CD4-positive, alpha-beta T cell (primary cell): ENCODE measurements at regions of chr15 and their contacts with region 1.

Region 1: DNA sequence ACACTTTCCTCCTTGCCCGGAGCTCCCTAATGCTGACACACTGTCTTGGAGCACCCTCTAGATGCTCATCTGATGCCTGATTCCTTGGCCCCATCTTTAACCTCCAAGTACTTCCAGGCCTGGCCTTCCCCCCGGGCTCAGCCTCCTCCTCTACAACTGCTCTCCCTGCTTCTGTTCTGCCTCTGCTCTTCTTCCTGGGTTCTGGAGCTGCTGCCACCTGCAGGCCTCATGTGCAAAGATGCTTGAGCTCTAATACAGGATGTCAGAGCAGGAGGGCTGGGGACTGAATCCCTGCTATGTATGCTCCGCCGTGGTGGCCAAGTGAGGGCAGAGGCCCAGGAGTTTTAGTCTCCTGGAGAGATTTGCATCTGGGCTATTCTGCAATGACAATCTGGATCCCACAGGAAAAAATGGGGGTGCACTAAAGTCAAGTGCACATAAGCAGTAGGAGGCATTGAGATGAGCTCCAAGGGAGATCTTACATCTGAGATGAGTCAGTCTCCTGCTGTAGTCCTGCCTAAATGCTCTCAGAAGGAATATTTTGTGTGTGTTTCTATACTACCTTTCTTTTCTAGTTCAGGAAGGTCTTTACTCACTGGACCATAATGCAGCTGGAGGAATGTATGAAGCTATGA is 296.3 kb downstream of the UACA start:
- DNase-seq: peak in 13 of 14 experiments; percentile 35 to 75 (median 45)
- ATAC-seq: peak; percentile 84
- H3K4me3 ChIP-seq: no peak overlapping the region
- H3K4me3 Mint-ChIP-seq: no peak overlapping the region
- H3K27ac ChIP-seq: no peak overlapping the region
- H3K27ac Mint-ChIP-seq: no peak overlapping the region
- H3K4me1 ChIP-seq: peaks cover 6% of the 10 kb centered on the region
- H3K4me1 Mint-ChIP-seq: peaks cover 5% of the 10 kb centered on the region
- H3K27me3 ChIP-seq: peaks cover 0 to 2% of the 10 kb centered on the region in 2 experiments
- H3K27me3 Mint-ChIP-seq: no peaks in the 10 kb centered on the region
- CTCF ChIP-seq: peak; percentile 70

Region 2: GRCh38 chr15:70111203-70112073 is 355.6 kb before region 1 on chr15:
- CTCF ChIA-PET with region 1: no interaction called
- POLR2A ChIA-PET with region 1: no interaction called
- intact Hi-C with region 1: loop called in 1 of 2 experiments (anchors 10 kb)
- DNase-seq: no peak
- ATAC-seq: no peak
- H3K4me3 ChIP-seq: no peak overlapping the region
- H3K4me3 Mint-ChIP-seq: no peak overlapping the region
- H3K27ac ChIP-seq: no peak overlapping the region
- H3K27ac Mint-ChIP-seq: no peak overlapping the region
- H3K4me1 ChIP-seq: peaks cover 4% of the 10 kb centered on the region
- H3K4me1 Mint-ChIP-seq: peaks cover 5% of the 10 kb centered on the region
- H3K27me3 ChIP-seq: no peaks in the 10 kb centered on the region
- H3K27me3 Mint-ChIP-seq: no peaks in the 10 kb centered on the region
- CTCF ChIP-seq: no peak

Region 3: DNA sequence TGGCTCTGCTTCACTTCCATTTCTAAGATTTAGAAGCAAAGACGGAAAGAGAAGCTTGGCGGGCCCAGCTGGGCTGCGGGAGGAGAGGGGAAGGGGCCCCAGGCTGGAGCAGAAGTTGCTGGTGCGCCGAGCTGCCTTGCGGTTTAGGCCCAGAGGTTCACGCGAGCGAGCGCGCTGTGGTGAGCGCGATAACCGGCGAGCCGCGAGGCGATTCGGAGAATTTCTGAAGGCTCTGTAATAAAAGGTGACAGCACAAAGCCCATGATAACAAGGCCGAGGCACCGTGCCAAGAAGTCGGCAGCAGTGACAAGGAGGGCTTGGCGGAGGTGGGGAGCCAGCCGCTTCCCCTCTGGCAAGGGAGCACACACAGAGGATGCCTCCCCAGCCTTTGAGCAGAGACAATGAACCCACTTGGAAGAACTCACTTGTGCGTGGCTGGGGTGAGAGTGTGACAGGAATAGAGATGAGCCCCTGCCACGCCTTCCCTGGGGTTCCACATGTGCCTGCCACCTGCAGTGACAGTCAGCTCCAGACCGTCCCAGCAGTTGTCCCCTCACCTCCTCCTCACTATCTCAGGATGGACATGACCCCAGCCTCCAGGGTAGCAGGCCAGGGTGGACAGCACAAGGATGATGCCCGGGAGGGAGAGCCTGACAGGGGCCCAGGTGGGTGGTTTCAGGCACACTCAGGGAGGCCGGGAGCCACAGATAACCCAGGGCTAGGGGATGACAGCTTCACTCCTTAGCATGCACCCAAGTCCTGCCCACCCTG is 18.9 kb before region 1 on chr15:
- CTCF ChIA-PET with region 1: no interaction called
- POLR2A ChIA-PET with region 1: no interaction called
- intact Hi-C with region 1: no loop called
- DNase-seq: peak; percentile 9 to 64 (median 38)
- ATAC-seq: peak; percentile 57
- H3K4me3 ChIP-seq: peak overlapping the region; percentile 3
- H3K4me3 Mint-ChIP-seq: peak overlapping the region; percentile 66
- H3K27ac ChIP-seq: no peak overlapping the region
- H3K27ac Mint-ChIP-seq: no peak overlapping the region
- H3K4me1 ChIP-seq: peaks cover 45% of the 10 kb centered on the region
- H3K4me1 Mint-ChIP-seq: peaks cover 45% of the 10 kb centered on the region
- H3K27me3 ChIP-seq: peaks cover 4 to 9% of the 10 kb centered on the region in 2 experiments
- H3K27me3 Mint-ChIP-seq: peaks cover 17% of the 10 kb centered on the region
- CTCF ChIP-seq: no peak

Region 4: DNA sequence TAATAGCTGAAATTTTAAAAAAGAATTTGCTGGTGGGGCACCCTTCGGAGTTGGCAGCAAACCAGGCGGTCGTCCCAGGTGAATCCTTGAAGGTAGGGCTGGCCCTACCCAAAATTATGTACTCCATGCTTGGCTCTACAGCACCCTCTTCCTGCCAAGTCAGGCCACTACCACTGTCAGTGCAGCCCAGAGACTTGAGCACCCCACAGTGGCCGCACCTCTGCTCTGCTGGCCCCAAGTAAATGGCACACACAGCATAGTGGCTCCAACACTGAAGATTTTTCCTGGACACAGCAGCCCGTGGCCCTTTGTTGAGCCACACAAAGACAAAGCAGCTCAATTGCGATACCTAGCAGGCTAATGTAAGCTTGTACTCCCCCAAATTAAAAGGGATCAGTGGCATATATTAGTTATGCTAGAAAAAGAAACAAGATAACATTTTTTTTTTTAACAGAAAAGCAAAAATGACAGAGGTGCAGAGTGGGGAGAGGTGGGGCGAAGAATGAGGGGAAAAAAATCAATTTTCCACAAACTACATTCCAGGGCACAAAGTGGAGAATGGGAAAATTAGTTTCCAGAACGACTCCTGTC is 45.9 kb after region 1 on chr15:
- CTCF ChIA-PET with region 1: no interaction called
- POLR2A ChIA-PET with region 1: no interaction called
- intact Hi-C with region 1: loop called in 1 of 2 experiments (anchors 2 kb)
- DNase-seq: peak; percentile 36 to 83 (median 56)
- ATAC-seq: peak; percentile 98
- H3K4me3 ChIP-seq: no peak overlapping the region
- H3K4me3 Mint-ChIP-seq: no peak overlapping the region
- H3K27ac ChIP-seq: no peak overlapping the region
- H3K27ac Mint-ChIP-seq: no peak overlapping the region
- H3K4me1 ChIP-seq: peaks cover 25% of the 10 kb centered on the region
- H3K4me1 Mint-ChIP-seq: peaks cover 12% of the 10 kb centered on the region
- H3K27me3 ChIP-seq: no peaks in the 10 kb centered on the region
- H3K27me3 Mint-ChIP-seq: no peaks in the 10 kb centered on the region
- CTCF ChIP-seq: peak; percentile 74

Region 5: GRCh38 chr15:70584838-70585706 is 118.1 kb after region 1 on chr15:
- CTCF ChIA-PET with region 1: no interaction called
- POLR2A ChIA-PET with region 1: no interaction called
- intact Hi-C with region 1: loop called in 1 of 2 experiments (anchors 5 kb)
- DNase-seq: peak; percentile 24 to 73 (median 46)
- ATAC-seq: peak; percentile 86
- H3K4me3 ChIP-seq: no peak overlapping the region
- H3K4me3 Mint-ChIP-seq: peak overlapping the region; percentile 68
- H3K27ac ChIP-seq: no peak overlapping the region
- H3K27ac Mint-ChIP-seq: no peak overlapping the region
- H3K4me1 ChIP-seq: peaks cover 16% of the 10 kb centered on the region
- H3K4me1 Mint-ChIP-seq: peaks cover 21% of the 10 kb centered on the region
- H3K27me3 ChIP-seq: peaks cover 0 to 5% of the 10 kb centered on the region in 2 experiments
- H3K27me3 Mint-ChIP-seq: peaks cover 15% of the 10 kb centered on the region
- CTCF ChIP-seq: peak; percentile 76